ENCODE measurements at regions of chr11 and their contacts with region 1.

Region 1: GRCh38 chr11:60570970-60571369 is 55.8 kb downstream of the MS4A13 start:
- DNase-seq: peak; percentile 72
- ATAC-seq: peak; percentile 82
- H3K4me3 ChIP-seq: no peak overlapping the region
- H3K4me3 Mint-ChIP-seq: no peak overlapping the region
- H3K27ac ChIP-seq: no peak overlapping the region
- H3K27ac Mint-ChIP-seq: peak overlapping the region; percentile 16
- H3K4me1 ChIP-seq: peaks cover 8 to 17% of the 10 kb centered on the region in 2 donors
- H3K4me1 Mint-ChIP-seq: peaks cover 19% of the 10 kb centered on the region
- H3K27me3 ChIP-seq: no peaks in the 10 kb centered on the region
- H3K27me3 Mint-ChIP-seq: no peaks in the 10 kb centered on the region
- CTCF ChIP-seq: no peak

Region 2: DNA sequence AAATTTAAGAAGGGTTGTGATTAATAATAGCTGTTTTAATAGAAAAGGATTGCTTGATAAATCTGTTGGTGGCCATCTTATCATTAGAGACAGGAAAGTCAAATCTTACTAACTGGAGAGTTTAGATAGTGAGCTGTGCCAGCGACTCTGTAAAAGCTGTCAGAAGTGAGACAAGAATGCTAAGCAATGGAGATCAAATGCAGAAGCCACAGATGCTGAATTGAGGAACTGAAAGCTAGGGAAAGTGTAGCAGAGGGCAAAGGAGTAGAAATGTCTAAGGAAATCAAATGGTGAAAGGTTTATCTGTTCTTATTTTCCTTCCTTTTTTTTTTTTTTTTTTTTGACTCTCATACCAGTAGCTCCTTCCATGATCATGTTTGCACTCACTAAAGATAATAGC is 42.0 kb before region 1 on chr11:
- CTCF ChIA-PET with region 1: no interaction called
- POLR2A ChIA-PET with region 1: no interaction called
- intact Hi-C with region 1: loop called (anchors 10 kb)
- DNase-seq: peak; percentile 75
- ATAC-seq: peak; percentile 87
- H3K4me3 ChIP-seq: no peak overlapping the region
- H3K4me3 Mint-ChIP-seq: no peak overlapping the region
- H3K27ac ChIP-seq: no peak overlapping the region
- H3K27ac Mint-ChIP-seq: peak overlapping the region; percentile 53
- H3K4me1 ChIP-seq: peaks cover 4 to 9% of the 10 kb centered on the region in 2 donors
- H3K4me1 Mint-ChIP-seq: peaks cover 15% of the 10 kb centered on the region
- H3K27me3 ChIP-seq: no peaks in the 10 kb centered on the region
- H3K27me3 Mint-ChIP-seq: no peaks in the 10 kb centered on the region
- CTCF ChIP-seq: no peak

Measured in B cell (primary cell).